WTC11 (cell line): ENCODE measurements at regions of chr1 and their contacts with region 1.

Region 1: GRCh38 chr1:182595641-182596240 is 6.7 kb upstream of the RNASEL start:
- DNase-seq: peak; percentile 84
- ATAC-seq: peak; percentile 74
- H3K4me3 Mint-ChIP-seq: no peak overlapping the region
- H3K27ac Mint-ChIP-seq: no peak overlapping the region
- H3K4me1 Mint-ChIP-seq: peaks cover 7% of the 10 kb centered on the region; the same call in 1 of the 2 replicates
- H3K27me3 Mint-ChIP-seq: no peaks in the 10 kb centered on the region
- CTCF ChIP-seq: peak; percentile 70

Region 2: GRCh38 chr1:182484591-182485257 is 111.0 kb before region 1 on chr1:
- CTCF ChIA-PET with region 1: interaction called, 14 read pairs
- POLR2A ChIA-PET with region 1: no interaction called
- DNase-seq: peak; percentile 54
- ATAC-seq: peak; percentile 99
- H3K4me3 Mint-ChIP-seq: no peak overlapping the region
- H3K27ac Mint-ChIP-seq: no peak overlapping the region
- H3K4me1 Mint-ChIP-seq: no peaks in the 10 kb centered on the region
- H3K27me3 Mint-ChIP-seq: no peaks in the 10 kb centered on the region
- CTCF ChIP-seq: peak; percentile 40; the same call in 1 of the 2 replicates

Region 3: GRCh38 chr1:182806015-182806678 is 210.4 kb after region 1 on chr1:
- CTCF ChIA-PET with region 1: interaction called, 12 read pairs
- POLR2A ChIA-PET with region 1: no interaction called
- DNase-seq: peak; percentile 82
- ATAC-seq: peak; percentile 98
- H3K4me3 Mint-ChIP-seq: no peak overlapping the region; the same call in 1 of the 2 replicates
- H3K27ac Mint-ChIP-seq: no peak overlapping the region
- H3K4me1 Mint-ChIP-seq: peaks cover 18% of the 10 kb centered on the region
- H3K27me3 Mint-ChIP-seq: no peaks in the 10 kb centered on the region
- CTCF ChIP-seq: no peak